OCI-LY7 (cell line): ENCODE measurements at regions of chr20 and their contacts with region 1.

Region 1: DNA sequence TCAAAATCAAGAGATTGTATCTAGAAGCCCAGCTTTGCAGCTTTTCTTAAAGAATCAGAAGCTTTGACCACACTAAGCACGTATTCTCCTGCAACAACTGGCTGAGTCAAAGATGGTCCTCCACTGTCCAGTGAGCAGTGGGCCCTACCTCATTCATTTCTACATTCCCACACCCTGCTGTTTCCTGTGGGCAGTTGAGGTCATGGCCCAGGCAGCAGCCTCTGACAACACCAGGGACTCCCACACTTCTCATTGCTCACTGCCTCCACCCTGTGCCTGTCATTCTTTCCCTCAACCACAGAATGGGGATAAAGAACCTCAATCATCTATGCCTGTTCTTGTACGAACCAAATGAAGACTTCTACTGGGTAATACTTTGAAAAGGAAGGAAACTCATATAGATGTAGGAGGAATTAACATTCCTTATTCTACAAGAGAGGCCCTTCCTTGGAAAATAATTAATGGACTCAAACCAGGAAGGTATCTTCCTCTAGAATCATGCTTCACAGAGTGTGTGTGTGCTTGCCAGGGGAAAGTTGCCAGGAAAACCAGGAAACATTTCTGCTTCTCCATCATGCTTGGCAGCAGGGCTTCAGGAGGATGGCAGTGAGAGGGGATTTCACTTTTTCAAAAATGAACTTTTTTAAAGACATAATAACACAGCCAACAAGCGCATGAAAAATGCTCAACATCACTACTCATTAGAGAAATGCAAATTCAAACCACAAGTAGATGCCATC is 191.7 kb upstream of the RIN2 start:
- DNase-seq: no peak
- H3K4me3 ChIP-seq: no peak overlapping the region
- H3K27ac ChIP-seq: no peak overlapping the region
- H3K4me1 ChIP-seq: no peaks in the 10 kb centered on the region
- CTCF ChIP-seq: no peak

Region 2: GRCh38 chr20:19531446-19531845 is 35.0 kb before region 1 on chr20:
- CTCF ChIA-PET with region 1: no interaction called
- POLR2A ChIA-PET with region 1: no interaction called
- intact Hi-C with region 1: no loop called
- DNase-seq: no peak
- H3K4me3 ChIP-seq: no peak overlapping the region
- H3K27ac ChIP-seq: no peak overlapping the region
- H3K4me1 ChIP-seq: no peaks in the 10 kb centered on the region
- CTCF ChIP-seq: no peak

Region 3: DNA sequence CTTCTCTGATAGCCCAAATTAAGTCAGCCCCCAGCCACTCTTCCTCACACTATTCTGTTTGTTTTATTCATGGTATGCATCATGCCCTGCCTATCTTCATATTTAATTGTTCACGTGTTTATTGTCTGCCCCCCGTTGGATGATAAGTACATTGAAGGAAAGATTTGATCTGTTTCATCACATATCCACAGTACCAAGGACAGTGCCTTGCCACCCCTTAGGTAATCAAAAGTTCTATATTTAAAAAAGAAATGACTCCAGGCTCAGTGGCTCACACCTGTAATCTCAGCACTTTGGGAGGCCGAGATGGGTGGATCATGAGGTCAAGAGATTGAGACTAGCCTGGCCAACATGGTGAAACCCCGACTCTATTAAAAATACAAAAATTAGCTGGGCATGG is 181.5 kb after region 1 on chr20:
- CTCF ChIA-PET with region 1: interaction called, 18 read pairs
- POLR2A ChIA-PET with region 1: no interaction called
- intact Hi-C with region 1: no loop called
- DNase-seq: no peak
- H3K4me3 ChIP-seq: no peak overlapping the region
- H3K27ac ChIP-seq: no peak overlapping the region
- H3K4me1 ChIP-seq: no peaks in the 10 kb centered on the region
- CTCF ChIP-seq: no peak